ENCODE measurements at regions of chr13 and their contacts with region 1.

Region 1: DNA sequence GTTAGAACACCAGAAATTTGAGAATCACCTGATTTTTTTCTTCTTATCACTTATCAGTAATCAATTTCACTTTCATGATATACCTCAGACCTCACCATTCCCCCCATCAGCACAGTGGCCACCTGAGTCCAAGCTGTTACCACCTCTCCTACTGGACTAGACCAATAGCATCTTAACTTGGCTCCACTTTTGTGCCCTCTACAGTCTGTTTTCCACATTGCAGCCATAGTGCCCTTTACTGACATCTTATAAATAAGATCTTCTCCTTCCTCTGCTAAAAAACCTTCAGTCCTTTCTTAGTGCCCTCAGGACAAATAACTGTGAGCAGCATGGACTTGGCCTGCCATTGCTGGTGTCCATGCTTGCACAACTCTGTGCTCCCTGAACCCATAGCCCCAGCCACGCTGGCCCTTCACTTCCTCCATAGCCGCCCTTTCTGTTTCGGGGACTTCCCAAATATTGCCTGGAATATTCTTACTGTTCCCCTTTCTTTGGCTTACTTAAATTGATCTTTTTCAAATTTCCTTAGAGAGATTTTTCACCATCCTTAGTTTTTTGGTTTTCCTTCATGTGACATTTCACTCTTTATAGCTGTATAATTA is 380.8 kb downstream of the LMO7 start:
- H3K4me3 Mint-ChIP-seq: no peak overlapping the region
- H3K27ac Mint-ChIP-seq: no peak overlapping the region
- H3K4me1 Mint-ChIP-seq: peaks cover 10% of the 10 kb centered on the region
- H3K27me3 Mint-ChIP-seq: no peaks in the 10 kb centered on the region

Region 2: GRCh38 chr13:76053181-76053580 is 36.3 kb after region 1 on chr13:
- intact Hi-C with region 1: loop called (anchors 1 kb)
- H3K4me3 Mint-ChIP-seq: no peak overlapping the region
- H3K27ac Mint-ChIP-seq: no peak overlapping the region
- H3K4me1 Mint-ChIP-seq: no peaks in the 10 kb centered on the region
- H3K27me3 Mint-ChIP-seq: no peaks in the 10 kb centered on the region

Region 3: DNA sequence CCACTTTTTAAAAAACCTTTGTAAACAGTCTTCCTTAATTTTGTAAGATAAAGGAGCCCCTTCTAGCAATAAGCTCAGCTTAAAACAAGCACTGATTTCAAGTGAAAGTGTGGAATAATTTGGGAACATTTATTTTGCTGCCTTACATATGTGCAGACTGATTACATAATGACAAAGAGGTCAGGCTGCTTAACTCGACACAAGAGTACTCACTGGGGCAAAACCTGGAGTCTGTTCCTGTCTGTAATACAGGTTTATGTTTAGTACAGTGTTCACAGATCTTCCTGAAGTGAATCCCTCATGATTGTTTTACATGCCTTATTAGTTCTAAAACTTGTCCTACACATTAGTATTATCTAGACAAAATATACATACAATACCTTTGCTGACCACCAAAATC is 229.0 kb after region 1 on chr13:
- intact Hi-C with region 1: no loop called
- H3K4me3 Mint-ChIP-seq: no peak overlapping the region
- H3K27ac Mint-ChIP-seq: no peak overlapping the region
- H3K4me1 Mint-ChIP-seq: no peaks in the 10 kb centered on the region
- H3K27me3 Mint-ChIP-seq: no peaks in the 10 kb centered on the region